ENCODE measurements at regions of chr2 and their contacts with region 1.

Region 1: GRCh38 chr2:162123806-162124758 is 28.0 kb downstream of the GCG start:
- DNase-seq: peak; percentile 44 to 67 (median 54)
- ATAC-seq: peak; percentile 83
- H3K4me3 ChIP-seq: no peak overlapping the region
- H3K27ac ChIP-seq: no peak overlapping the region
- H3K4me1 ChIP-seq: no peaks in the 10 kb centered on the region
- H3K27me3 ChIP-seq: no peaks in the 10 kb centered on the region
- CTCF ChIP-seq: peak; percentile 29 to 77 (median 42); a peak in 5 of 6 replicates
- EP300 ChIP-seq: no peak
- POLR2A ChIP-seq: no peak
- RAD21 ChIP-seq: peak; percentile 62 to 80

Region 2: GRCh38 chr2:161223139-161223732 is 900.8 kb before region 1 on chr2:
- CTCF ChIA-PET with region 1: interaction called, 10 read pairs
- POLR2A ChIA-PET with region 1: no interaction called
- in situ Hi-C with region 1: no loop called
- intact Hi-C with region 1: loop called (anchors 5 kb)
- DNase-seq: peak; percentile 24 to 58 (median 32)
- ATAC-seq: peak; percentile 77
- H3K4me3 ChIP-seq: no peak overlapping the region
- H3K27ac ChIP-seq: no peak overlapping the region
- H3K4me1 ChIP-seq: no peaks in the 10 kb centered on the region
- H3K27me3 ChIP-seq: no peaks in the 10 kb centered on the region
- CTCF ChIP-seq: peak; percentile 43 to 73 (median 48); a peak in 4 of 6 replicates
- EP300 ChIP-seq: no peak
- POLR2A ChIP-seq: no peak
- RAD21 ChIP-seq: peak; percentile 52 to 64; a peak in 2 of 4 replicates

Region 3: GRCh38 chr2:161250864-161251436 is 873.1 kb before region 1 on chr2:
- CTCF ChIA-PET with region 1: no interaction called
- POLR2A ChIA-PET with region 1: no interaction called
- in situ Hi-C with region 1: loop called (anchors 25 kb)
- intact Hi-C with region 1: loop called (anchors 10 kb)
- DNase-seq: peak; percentile 39 to 80 (median 60)
- ATAC-seq: peak; percentile 90
- H3K4me3 ChIP-seq: no peak overlapping the region
- H3K27ac ChIP-seq: no peak overlapping the region
- H3K4me1 ChIP-seq: peaks cover 0 to 2% of the 10 kb centered on the region in 2 experiments; a peak in 1 of 5 replicates
- H3K27me3 ChIP-seq: no peaks in the 10 kb centered on the region; a peak in 1 of 5 replicates
- CTCF ChIP-seq: peak; percentile 61 to 75 (median 70)
- EP300 ChIP-seq: no peak
- POLR2A ChIP-seq: no peak
- RAD21 ChIP-seq: peak; percentile 58 to 82

Region 4: DNA sequence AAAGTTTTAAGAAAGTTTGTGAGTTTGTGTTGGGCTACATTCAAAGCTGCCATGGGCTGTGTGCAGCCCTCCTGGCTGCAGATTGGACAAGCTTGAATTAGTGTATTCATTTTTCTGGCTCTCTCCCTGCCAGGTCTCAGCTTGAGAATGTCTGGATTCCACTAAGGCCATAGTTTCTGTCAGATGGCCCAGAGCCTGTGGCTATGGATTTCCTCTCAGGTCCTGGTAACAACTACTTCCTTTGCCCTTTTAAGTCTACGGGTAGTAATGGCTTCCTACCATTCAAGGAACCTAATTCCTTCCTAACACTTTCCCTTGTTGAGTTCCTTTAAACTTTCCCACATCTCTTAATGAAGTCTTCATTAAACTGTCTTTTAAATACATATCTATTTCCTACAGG is 840.2 kb before region 1 on chr2:
- CTCF ChIA-PET with region 1: no interaction called
- POLR2A ChIA-PET with region 1: no interaction called
- in situ Hi-C with region 1: no loop called
- intact Hi-C with region 1: loop called (anchors 5 kb)
- DNase-seq: no peak
- ATAC-seq: no peak
- H3K4me3 ChIP-seq: no peak overlapping the region
- H3K27ac ChIP-seq: no peak overlapping the region
- H3K4me1 ChIP-seq: peaks cover 0 to 8% of the 10 kb centered on the region in 2 experiments; a peak in 1 of 5 replicates
- H3K27me3 ChIP-seq: peaks cover 0 to 6% of the 10 kb centered on the region in 2 experiments; a peak in 2 of 5 replicates
- CTCF ChIP-seq: no peak
- EP300 ChIP-seq: no peak
- POLR2A ChIP-seq: no peak
- RAD21 ChIP-seq: no peak

Region 5: DNA sequence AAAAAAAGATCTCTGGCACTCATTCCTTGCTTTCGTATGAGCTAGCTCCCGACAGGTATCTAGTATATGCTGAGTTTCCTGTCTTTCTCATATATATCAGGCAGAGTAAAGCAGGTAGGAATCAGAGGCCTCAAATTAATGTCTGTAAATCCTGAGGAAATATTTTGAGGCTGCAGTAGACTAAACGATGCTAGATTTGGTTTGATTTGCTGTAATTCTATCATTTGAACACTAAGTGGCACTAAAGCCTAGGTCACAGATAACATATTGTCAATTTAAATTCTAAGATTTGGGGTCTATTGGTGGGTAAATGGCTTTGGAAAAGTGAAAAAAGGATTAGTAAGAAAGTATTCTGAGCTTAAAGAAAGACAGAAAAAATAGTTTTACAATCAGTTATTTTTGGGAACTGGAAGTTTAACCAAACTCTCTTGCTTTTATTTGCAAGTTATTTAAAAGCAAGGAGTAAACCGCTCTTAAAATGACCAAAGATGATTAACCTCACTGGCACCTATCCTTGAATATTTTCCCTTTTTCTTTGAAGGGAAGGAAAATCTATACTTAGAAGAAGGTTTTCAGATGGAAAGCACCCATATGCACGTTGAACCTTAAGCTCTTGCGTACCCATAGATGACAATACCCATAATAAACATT is 537.4 kb before region 1 on chr2:
- CTCF ChIA-PET with region 1: no interaction called
- POLR2A ChIA-PET with region 1: no interaction called
- in situ Hi-C with region 1: no loop called
- intact Hi-C with region 1: loop called (anchors 1 kb)
- DNase-seq: peak; percentile 16 to 20 (median 18)
- ATAC-seq: peak; percentile 50; the same call in 2 of the 3 replicates
- H3K4me3 ChIP-seq: no peak overlapping the region
- H3K27ac ChIP-seq: no peak overlapping the region
- H3K4me1 ChIP-seq: no peaks in the 10 kb centered on the region
- H3K27me3 ChIP-seq: no peaks in the 10 kb centered on the region
- CTCF ChIP-seq: peak; percentile 35 to 57 (median 46); a peak in 5 of 6 replicates
- EP300 ChIP-seq: no peak
- POLR2A ChIP-seq: no peak
- RAD21 ChIP-seq: peak; percentile 47 to 70

Region 6: DNA sequence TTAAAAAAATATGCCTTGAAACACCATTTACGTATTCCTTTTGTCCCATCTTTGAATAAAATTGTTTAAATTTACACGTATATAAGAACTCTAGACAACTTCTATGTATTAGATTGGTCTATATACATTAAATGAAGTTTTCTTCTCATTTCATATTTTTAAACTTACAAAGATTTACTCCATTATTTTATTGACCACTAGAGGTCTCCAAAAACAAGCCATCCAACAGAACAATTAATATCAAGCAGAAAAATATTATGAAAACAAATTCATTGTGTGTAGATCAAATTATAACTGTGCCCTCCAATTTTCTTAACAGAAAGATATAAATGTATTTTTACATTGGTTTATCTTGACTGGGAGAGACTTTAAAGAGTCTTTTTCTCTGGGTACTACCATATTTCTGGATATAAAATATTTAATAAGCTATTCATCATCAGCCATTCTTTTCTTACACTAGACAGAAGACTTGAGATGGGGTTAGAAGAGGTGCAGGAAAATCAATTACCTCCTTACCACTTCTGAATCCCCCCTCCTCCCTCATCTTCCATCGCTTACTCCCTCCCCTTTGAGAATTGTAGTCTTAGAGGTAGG is 116.5 kb before region 1 on chr2:
- CTCF ChIA-PET with region 1: interaction called, 5 read pairs
- POLR2A ChIA-PET with region 1: no interaction called
- in situ Hi-C with region 1: no loop called
- intact Hi-C with region 1: loop called (anchors 5 kb)
- DNase-seq: peak in 1 of 4 experiments; percentile 9
- ATAC-seq: no peak
- H3K4me3 ChIP-seq: no peak overlapping the region
- H3K27ac ChIP-seq: no peak overlapping the region
- H3K4me1 ChIP-seq: no peaks in the 10 kb centered on the region
- H3K27me3 ChIP-seq: no peaks in the 10 kb centered on the region
- CTCF ChIP-seq: peak in 1 of 3 experiments; percentile 63; a peak in 3 of 6 replicates
- EP300 ChIP-seq: no peak
- POLR2A ChIP-seq: no peak
- RAD21 ChIP-seq: no peak; a peak in 1 of 4 replicates